MCF 10A (cell line): ENCODE measurements at regions of chr7 and their contacts with region 1.

Region 1: GRCh38 chr7:30348083-30348560 is 63.7 kb downstream of the ZNRF2 start:
- DNase-seq: peak; percentile 95
- H3K4me3 Mint-ChIP-seq: peak overlapping the region; percentile 63
- H3K27ac Mint-ChIP-seq: peak overlapping the region; percentile 93
- H3K4me1 Mint-ChIP-seq: peaks cover 43% of the 10 kb centered on the region
- H3K27me3 Mint-ChIP-seq: no peaks in the 10 kb centered on the region
- CTCF ChIP-seq: no peak

Region 2: DNA sequence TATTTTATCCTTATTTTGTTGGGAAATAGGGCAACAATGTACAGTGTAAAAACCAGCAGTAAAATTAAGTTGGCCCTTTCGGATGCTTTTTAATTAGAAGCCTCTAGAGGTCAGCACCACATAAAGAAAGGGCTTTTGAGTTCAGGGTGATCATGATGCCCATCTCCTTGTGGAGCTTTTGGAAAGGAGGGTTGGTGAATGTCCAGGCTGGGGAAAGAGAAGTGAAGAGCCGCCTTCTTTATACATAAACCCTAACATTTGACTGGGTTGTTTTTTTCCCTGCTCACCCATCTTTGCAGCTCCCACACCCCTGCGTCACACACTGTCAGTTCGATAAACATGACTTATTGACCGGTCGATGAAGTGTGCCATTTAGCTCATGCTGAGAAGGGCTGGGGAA is 183.6 kb before region 1 on chr7:
- CTCF ChIA-PET with region 1: interaction called, 4 read pairs
- POLR2A ChIA-PET with region 1: interaction called, 7 read pairs
- intact Hi-C with region 1: loop called (anchors 2 kb)
- DNase-seq: peak; percentile 82
- H3K4me3 Mint-ChIP-seq: no peak overlapping the region
- H3K27ac Mint-ChIP-seq: peak overlapping the region; percentile 92
- H3K4me1 Mint-ChIP-seq: peaks cover 42% of the 10 kb centered on the region
- H3K27me3 Mint-ChIP-seq: no peaks in the 10 kb centered on the region
- CTCF ChIP-seq: peak; percentile 63

Region 3: DNA sequence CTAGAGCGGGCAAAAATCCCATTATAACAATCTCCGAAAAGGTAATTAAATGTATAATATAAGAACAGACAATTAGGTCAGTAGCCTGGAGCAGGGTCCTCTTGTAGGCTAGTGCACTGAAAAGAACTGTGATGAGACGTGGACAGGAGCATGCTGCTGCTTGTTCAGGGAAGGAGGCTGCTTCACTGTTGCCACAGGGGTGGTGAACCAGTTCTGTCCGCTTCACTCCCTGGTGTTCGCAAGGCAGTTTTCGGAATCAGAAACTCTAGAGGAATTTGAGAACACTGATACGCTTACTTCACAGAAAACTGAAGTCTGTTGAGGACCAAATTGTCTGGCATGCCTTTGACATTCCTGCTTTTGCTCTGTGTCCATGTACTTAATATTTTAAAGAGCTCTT is 46.4 kb before region 1 on chr7:
- CTCF ChIA-PET with region 1: interaction called, 4 read pairs
- POLR2A ChIA-PET with region 1: interaction called, 23 read pairs
- intact Hi-C with region 1: no loop called
- DNase-seq: peak; percentile 84
- H3K4me3 Mint-ChIP-seq: peak overlapping the region; percentile 31
- H3K27ac Mint-ChIP-seq: peak overlapping the region; percentile 27
- H3K4me1 Mint-ChIP-seq: peaks cover 29% of the 10 kb centered on the region
- H3K27me3 Mint-ChIP-seq: no peaks in the 10 kb centered on the region
- CTCF ChIP-seq: no peak

Region 4: GRCh38 chr7:30315589-30315988 is 32.5 kb before region 1 on chr7:
- CTCF ChIA-PET with region 1: no interaction called
- POLR2A ChIA-PET with region 1: interaction called, 75 read pairs
- intact Hi-C with region 1: no loop called
- DNase-seq: no peak
- H3K4me3 Mint-ChIP-seq: no peak overlapping the region
- H3K27ac Mint-ChIP-seq: no peak overlapping the region
- H3K4me1 Mint-ChIP-seq: peaks cover 30% of the 10 kb centered on the region
- H3K27me3 Mint-ChIP-seq: no peaks in the 10 kb centered on the region
- CTCF ChIP-seq: no peak

Region 5: DNA sequence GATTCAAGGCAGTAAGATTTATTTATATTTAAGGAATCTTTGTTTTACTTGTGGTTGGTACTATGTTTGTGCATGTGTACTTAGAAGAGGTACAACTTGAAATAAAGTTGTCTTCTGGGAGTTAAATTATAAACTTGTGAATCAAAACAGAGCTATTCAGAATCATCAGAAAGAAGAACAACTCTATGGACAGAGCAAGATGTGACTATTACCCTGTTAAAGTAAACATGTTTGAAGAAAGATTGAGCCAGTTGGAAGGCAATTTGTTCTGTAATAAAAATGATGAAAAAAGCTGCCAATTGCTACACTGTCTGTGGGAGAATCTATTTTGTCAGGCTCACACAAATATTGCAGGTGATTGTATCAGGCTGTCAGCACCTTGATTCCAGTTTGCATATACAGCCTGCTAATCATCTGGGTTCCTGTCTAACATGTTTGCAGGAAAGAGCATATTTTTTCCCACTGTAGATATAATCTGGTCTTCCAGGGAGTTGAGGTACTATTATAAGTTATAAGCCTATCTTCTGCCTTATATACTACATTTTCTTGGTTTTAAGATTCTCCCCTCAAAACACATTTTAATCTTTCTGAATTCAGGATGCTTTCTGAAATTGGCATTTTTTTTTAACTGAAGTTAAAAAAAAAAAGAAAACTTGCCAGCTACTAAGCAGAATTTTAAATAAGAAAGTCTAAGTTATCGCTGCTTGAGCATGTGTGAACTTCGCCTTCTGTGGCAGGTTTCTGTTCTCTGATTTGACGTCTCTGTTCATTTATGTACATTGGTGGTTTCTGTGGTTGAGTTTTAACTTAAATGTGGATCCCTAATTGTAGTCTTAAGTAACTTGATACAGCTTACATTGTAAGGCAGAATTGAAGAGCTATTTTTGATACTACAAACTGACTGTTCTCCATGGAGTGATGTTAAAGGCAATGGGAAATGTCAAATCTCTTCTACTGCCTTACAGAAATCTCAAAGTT is 17.7 kb before region 1 on chr7:
- CTCF ChIA-PET with region 1: interaction called, 3 read pairs
- POLR2A ChIA-PET with region 1: interaction called, 56 read pairs
- intact Hi-C with region 1: no loop called
- DNase-seq: no peak
- H3K4me3 Mint-ChIP-seq: no peak overlapping the region
- H3K27ac Mint-ChIP-seq: no peak overlapping the region
- H3K4me1 Mint-ChIP-seq: peaks cover 32% of the 10 kb centered on the region
- H3K27me3 Mint-ChIP-seq: no peaks in the 10 kb centered on the region
- CTCF ChIP-seq: no peak

Region 6: DNA sequence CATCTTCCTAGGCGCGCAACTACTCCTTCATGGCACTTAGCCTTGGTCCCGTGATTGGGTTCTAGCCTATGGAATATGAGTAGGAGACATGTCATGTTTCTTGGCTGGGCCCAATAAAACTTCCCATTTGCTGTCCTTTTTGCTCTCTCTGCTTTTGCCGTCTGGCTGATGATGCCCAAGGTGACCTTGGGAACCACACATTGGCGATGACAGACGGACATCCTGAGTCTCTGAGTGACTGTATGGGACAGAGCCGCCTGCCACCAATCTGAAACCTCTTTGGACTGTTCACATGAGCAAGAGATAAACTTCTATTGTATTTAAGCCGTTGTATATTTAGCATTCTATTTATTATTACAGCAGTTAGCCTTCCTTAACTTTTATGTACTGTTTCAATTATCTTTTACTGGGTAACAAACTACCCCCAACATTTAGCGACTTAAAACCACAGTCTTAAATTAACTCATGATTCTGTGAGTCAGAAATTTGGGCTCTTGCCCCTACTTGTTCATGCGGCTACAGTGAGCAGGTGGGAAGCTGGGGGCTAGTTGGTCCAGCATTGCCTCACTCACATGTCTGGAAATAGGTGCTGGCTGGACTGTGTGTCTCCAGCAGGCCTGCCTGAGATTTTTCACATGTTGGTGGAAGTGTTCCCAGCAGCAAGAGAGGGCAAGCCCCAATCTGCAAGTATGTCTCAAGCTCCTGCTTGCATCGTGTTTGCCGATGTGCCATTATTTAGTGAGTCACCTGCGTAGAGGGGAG is 58.7 kb after region 1 on chr7:
- CTCF ChIA-PET with region 1: interaction called, 3 read pairs
- POLR2A ChIA-PET with region 1: interaction called, 27 read pairs
- intact Hi-C with region 1: loop called (anchors 5 kb)
- DNase-seq: peak; percentile 96
- H3K4me3 Mint-ChIP-seq: peak overlapping the region; percentile 36
- H3K27ac Mint-ChIP-seq: peak overlapping the region; percentile 96
- H3K4me1 Mint-ChIP-seq: peaks cover 44% of the 10 kb centered on the region
- H3K27me3 Mint-ChIP-seq: no peaks in the 10 kb centered on the region
- CTCF ChIP-seq: no peak